Activated CD4-positive, alpha-beta T cell treated with anti-CD3 and anti-CD28 coated beads for 36 hours (primary cell): ENCODE measurements at regions of chr13 and their contacts with region 1.

Region 1: GRCh38 chr13:79501538-79502232 is 20.7 kb downstream of the NDFIP2 start:
- DNase-seq: no peak
- ATAC-seq: peak; percentile 68
- H3K4me3 Mint-ChIP-seq: peak overlapping the region; percentile 32
- H3K27ac Mint-ChIP-seq: peak overlapping the region; percentile 87
- H3K4me1 Mint-ChIP-seq: peaks cover 90% of the 10 kb centered on the region
- H3K27me3 Mint-ChIP-seq: no peaks in the 10 kb centered on the region

Region 2: GRCh38 chr13:79516595-79516994 is 14.9 kb after region 1 on chr13:
- CTCF ChIA-PET with region 1: interaction called, 16 read pairs
- POLR2A ChIA-PET with region 1: no interaction called
- intact Hi-C with region 1: loop called in 1 of 2 experiments (anchors 2 kb)
- DNase-seq: no peak
- ATAC-seq: no peak
- H3K4me3 Mint-ChIP-seq: no peak overlapping the region
- H3K27ac Mint-ChIP-seq: no peak overlapping the region
- H3K4me1 Mint-ChIP-seq: peaks cover 53% of the 10 kb centered on the region
- H3K27me3 Mint-ChIP-seq: no peaks in the 10 kb centered on the region

Region 3: DNA sequence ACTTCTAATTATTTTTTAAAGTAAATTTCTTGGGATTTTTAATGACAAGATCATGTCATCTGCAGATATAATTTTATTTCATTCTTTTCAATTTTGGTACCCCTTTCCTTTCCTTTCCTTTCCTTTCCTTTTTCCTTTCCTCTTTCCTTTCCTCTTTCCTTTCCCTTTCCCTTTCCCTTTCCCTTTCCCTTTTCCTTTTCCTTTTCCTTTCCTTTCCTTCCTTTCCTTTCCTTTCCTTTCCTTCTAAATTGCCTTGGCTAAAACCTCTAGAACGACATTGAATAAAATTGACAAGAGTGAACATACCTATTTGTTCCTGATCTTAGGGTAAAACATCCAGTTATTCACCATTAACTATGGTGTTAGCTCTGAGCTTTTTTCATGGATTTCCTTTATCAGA is 313.4 kb after region 1 on chr13:
- CTCF ChIA-PET with region 1: no interaction called
- POLR2A ChIA-PET with region 1: no interaction called
- intact Hi-C with region 1: no loop called
- DNase-seq: no peak
- ATAC-seq: no peak
- H3K4me3 Mint-ChIP-seq: no peak overlapping the region
- H3K27ac Mint-ChIP-seq: no peak overlapping the region
- H3K4me1 Mint-ChIP-seq: no peaks in the 10 kb centered on the region
- H3K27me3 Mint-ChIP-seq: no peaks in the 10 kb centered on the region